ENCODE measurements at regions of chr21 and their contacts with region 1.

Region 1: DNA sequence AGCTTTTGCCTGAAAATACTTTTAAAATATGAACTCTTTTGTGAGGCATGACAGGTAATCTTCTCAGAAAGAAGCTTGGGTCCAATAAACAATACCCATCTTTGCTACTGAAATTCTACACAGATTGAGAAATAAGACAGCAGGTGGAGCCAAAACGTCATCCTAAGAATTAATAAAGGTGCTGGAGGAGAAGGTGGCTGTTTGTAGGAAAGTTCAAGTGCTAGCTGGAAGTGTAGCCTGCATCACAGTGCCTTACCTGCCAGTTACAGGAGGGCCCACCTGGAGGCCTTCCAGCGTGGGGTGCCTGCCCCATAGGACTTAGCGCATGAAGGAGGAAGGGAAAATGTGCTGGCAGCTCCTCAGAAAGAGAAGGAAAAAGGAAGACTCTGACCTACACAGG is 93.7 kb downstream of the TTC3 start:
- DNase-seq: peak; percentile 43
- H3K4me3 ChIP-seq: no peak overlapping the region
- H3K27ac ChIP-seq: no peak overlapping the region
- H3K4me1 ChIP-seq: no peaks in the 10 kb centered on the region
- H3K27me3 ChIP-seq: no peaks in the 10 kb centered on the region
- CTCF ChIP-seq: no peak
- POLR2A ChIP-seq: no peak

Region 2: GRCh38 chr21:36881228-36881627 is 285.5 kb before region 1 on chr21:
- CTCF ChIA-PET with region 1: no interaction called
- POLR2A ChIA-PET with region 1: no interaction called
- dilution Hi-C with region 1: no loop called
- intact Hi-C with region 1: no loop called
- DNase-seq: no peak
- H3K4me3 ChIP-seq: no peak overlapping the region
- H3K27ac ChIP-seq: no peak overlapping the region
- H3K4me1 ChIP-seq: no peaks in the 10 kb centered on the region
- H3K27me3 ChIP-seq: no peaks in the 10 kb centered on the region
- CTCF ChIP-seq: no peak
- POLR2A ChIP-seq: no peak

Region 3: GRCh38 chr21:37087188-37087587 is 79.5 kb before region 1 on chr21:
- CTCF ChIA-PET with region 1: no interaction called
- POLR2A ChIA-PET with region 1: no interaction called
- dilution Hi-C with region 1: no loop called
- intact Hi-C with region 1: no loop called
- DNase-seq: peak; percentile 31
- H3K4me3 ChIP-seq: no peak overlapping the region
- H3K27ac ChIP-seq: no peak overlapping the region
- H3K4me1 ChIP-seq: no peaks in the 10 kb centered on the region
- H3K27me3 ChIP-seq: no peaks in the 10 kb centered on the region
- CTCF ChIP-seq: no peak
- POLR2A ChIP-seq: no peak

Region 4: DNA sequence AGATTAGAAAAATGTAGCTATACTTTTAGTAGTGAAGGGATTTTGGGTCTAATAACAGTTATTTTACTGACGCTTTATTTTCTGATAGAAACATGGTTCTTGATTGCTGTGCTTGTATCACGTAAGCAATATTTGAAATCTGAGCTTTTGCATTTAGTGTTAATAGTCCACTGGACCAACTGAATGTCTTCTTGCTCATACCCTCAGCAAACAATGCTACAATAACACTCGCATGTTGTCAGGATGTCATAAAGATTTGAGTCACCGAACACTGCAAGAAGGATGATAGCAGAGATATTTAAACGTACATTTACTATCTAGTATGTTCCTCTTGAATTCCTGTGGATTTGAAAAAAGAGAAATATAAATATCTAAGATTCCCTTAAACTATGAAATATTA is 207.3 kb after region 1 on chr21:
- CTCF ChIA-PET with region 1: interaction called, 10 read pairs
- POLR2A ChIA-PET with region 1: no interaction called
- dilution Hi-C with region 1: no loop called
- intact Hi-C with region 1: no loop called
- DNase-seq: peak; percentile 85
- H3K4me3 ChIP-seq: no peak overlapping the region
- H3K27ac ChIP-seq: peak overlapping the region; percentile 82
- H3K4me1 ChIP-seq: peaks cover 54% of the 10 kb centered on the region
- H3K27me3 ChIP-seq: no peaks in the 10 kb centered on the region
- CTCF ChIP-seq: no peak
- POLR2A ChIP-seq: no peak

Region 5: DNA sequence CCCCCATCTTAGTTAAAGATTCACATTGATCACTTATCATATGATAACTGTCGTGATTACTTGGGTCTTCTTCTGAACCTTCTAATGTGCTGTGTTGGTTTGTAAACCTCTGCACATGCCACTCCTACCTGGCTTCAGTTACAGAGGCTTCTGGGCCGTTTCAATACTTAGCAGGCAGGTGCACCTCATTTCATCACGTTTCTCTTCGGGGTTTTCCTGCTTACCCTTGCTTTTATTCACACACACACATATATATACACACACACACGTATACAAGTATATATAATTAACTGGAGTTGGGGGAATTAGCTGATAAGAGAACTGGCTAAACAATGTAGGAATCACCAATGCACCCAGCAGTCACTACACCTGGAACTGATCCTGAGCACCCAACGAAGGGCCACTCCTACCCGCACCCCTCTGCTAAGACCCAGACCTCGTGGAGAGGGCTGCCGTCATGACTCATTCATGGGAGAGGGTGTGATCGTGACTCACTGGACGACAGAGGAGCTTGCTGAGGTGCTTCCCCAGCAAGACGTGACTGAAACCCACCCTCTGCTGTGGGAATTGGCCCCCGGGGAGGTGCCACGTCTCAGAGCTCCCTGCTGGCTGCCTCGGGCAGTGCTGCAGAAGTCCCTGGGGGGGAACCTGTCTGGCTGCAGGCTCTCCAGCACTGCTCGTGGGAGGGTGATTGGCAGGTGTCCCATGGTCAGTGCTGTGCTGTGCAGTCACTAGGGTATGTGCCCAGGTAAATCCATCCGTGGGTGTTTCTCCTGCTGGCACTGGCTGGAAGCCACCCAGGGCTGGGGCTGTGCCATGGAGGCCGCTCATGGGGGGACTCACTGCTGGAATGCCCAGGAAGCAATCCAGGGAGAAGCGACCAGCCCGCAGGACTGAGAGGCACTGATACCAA is 366.4 kb after region 1 on chr21:
- CTCF ChIA-PET with region 1: no interaction called
- POLR2A ChIA-PET with region 1: no interaction called
- dilution Hi-C with region 1: no loop called
- intact Hi-C with region 1: no loop called
- DNase-seq: no peak
- H3K4me3 ChIP-seq: no peak overlapping the region
- H3K27ac ChIP-seq: no peak overlapping the region
- H3K4me1 ChIP-seq: no peaks in the 10 kb centered on the region
- H3K27me3 ChIP-seq: peaks cover 8 to 15% of the 10 kb centered on the region in 2 experiments
- CTCF ChIP-seq: no peak
- POLR2A ChIP-seq: no peak

Region 6: DNA sequence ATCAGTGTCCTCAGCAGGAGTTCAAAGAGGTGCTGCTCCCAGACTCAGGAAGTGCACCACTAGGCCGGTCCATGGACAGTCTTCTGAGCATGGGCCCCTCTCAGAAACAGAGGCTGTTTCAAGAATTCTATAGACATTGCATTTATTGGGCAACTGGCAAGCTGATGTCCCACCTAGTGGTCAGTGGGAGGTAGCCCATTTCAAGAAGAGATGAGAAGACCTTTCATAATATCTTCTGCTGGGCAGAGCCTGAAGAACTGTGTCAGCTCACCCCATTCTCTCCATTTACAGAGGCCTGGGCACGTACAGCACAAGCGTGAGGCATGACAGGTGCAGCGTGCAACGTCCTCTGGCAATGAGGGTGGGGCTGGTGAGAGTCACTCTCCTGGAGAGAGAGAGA is 415.9 kb after region 1 on chr21:
- CTCF ChIA-PET with region 1: interaction called, 5 read pairs
- POLR2A ChIA-PET with region 1: no interaction called
- dilution Hi-C with region 1: no loop called
- intact Hi-C with region 1: loop called (anchors 2 kb)
- DNase-seq: peak; percentile 69
- H3K4me3 ChIP-seq: no peak overlapping the region
- H3K27ac ChIP-seq: no peak overlapping the region
- H3K4me1 ChIP-seq: peaks cover 13% of the 10 kb centered on the region
- H3K27me3 ChIP-seq: no peaks in the 10 kb centered on the region
- CTCF ChIP-seq: peak; percentile 68 to 76
- POLR2A ChIP-seq: no peak

Region 7: GRCh38 chr21:37658817-37659458 is 492.2 kb after region 1 on chr21:
- CTCF ChIA-PET with region 1: no interaction called
- POLR2A ChIA-PET with region 1: no interaction called
- dilution Hi-C with region 1: no loop called
- intact Hi-C with region 1: loop called (anchors 5 kb)
- DNase-seq: peak; percentile 95
- H3K4me3 ChIP-seq: no peak overlapping the region
- H3K27ac ChIP-seq: peak overlapping the region; percentile 72
- H3K4me1 ChIP-seq: peaks cover 22% of the 10 kb centered on the region
- H3K27me3 ChIP-seq: no peaks in the 10 kb centered on the region
- CTCF ChIP-seq: peak; percentile 51 to 62
- POLR2A ChIP-seq: no peak

Measured in endothelial cell of umbilical vein (primary cell).